Left ventricle myocardium superior (tissue), 1 donor: ENCODE measurements at regions of chr3 and their contacts with region 1.

Region 1: GRCh38 chr3:81910244-81910852 is 148.9 kb upstream of the GBE1 start:
- DNase-seq: no peak
- ATAC-seq: no peak

Region 2: DNA sequence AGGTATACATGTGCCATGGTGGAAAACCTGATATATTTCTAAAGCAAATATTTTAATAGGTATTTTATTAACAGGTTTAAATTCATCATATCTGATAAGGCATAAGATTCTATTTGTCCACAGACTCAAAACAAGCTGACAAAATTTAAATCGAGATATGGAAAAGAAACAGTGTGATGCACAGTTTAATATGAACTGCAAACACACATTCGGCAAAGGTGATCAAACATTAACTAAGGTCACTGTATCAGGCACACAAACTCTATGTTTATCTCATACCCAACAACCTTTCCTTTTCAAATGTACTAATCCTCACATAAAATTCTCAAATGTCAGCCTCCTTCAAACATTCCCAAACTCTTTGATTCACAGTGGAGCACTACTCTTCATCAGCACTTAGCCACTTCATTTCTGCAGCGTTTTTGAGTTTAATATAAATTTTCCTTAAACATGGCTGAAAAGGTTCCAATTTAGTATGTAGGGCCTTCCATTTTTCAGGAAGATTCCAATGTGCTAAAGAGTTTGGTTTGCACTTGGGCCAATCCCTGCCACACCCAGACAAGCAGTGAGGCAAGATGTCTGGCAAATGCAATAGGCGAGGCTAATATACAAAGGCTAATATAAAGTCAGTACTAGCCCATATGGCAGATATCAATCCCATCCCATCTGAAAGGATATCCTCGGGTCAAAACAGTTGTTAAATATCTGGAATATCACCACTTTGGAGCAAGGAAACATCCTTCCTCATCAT is 233.5 kb before region 1 on chr3:
- intact Hi-C with region 1: loop called (anchors 10 kb)
- DNase-seq: no peak
- ATAC-seq: no peak

Region 3: GRCh38 chr3:81985996-81986723 is 75.8 kb after region 1 on chr3:
- intact Hi-C with region 1: no loop called
- DNase-seq: no peak
- ATAC-seq: no peak